Activated T-helper 2 cell treated with anti-CD3 and anti-CD28 coated beads, Interferon-gamma antibody, Interleukin-2, Interleukin-4, amounts not matched to agents 10 μg/mL and 5 μg/mL and 100 μg/mL, durations not matched to agents 14 hours and 24 hours and 36 hours (primary cell): ENCODE measurements at regions of chr16 and their contacts with region 1.

Region 1: GRCh38 chr16:58000706-58001676 is at the start of gene USB1:
- DNase-seq: peak; percentile 83
- H3K4me3 Mint-ChIP-seq: peak within 1 kb of the TSS; percentile 92
- H3K27ac Mint-ChIP-seq: peak within 1 kb of the TSS; percentile 90
- H3K4me1 Mint-ChIP-seq: peaks cover 35% of the 10 kb centered on the region
- H3K27me3 Mint-ChIP-seq: no peaks in the 10 kb centered on the region
- total RNA-seq, gene USB1: 51.6 and 57.8 TPM in 2 replicates

Region 2: DNA sequence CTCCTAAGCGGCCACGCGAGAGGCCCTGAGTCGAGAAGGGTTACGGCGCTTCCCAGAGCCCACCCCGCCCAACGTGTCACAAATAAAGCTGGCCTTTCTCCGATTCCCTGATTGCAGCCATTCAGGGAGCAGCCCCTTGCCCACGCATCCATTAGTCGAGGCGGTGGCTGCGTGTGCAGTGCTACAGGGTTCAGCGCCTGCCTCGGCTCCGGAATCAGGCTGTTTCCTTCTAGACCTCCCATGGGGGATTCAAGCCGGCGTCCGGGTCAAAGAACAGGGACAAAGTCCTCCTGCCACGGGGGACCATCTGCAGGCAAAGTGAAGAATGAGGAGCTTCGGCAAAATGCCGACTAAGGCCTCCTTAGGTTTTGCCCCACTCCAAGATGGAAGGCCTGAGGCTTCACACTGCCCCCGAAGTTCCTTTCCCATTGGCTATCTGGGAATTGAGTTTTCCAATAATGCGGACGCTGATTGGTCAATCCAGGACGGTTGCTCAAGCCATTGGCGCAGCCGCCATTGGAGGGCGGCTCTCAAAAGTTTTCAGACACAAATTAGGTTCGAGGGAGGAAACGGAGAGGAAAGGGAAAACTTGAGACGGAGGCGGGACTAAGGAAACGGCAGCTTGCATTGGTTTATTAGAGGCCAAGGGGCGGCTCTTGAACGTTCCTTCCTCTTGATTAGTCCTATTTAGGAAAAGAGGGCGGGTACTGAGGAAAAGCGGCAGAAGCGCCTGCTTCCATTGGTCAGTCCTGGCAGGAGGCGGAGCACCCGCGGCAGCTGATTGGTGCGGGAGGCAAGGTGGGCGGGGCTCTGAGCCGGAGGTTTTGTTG is 265.9 kb before region 1 on chr16:
- intact Hi-C with region 1: loop called (anchors 1 kb)
- DNase-seq: peak; percentile 98
- H3K4me3 Mint-ChIP-seq: peak overlapping the region; percentile 97
- H3K27ac Mint-ChIP-seq: peak overlapping the region; percentile 96
- H3K4me1 Mint-ChIP-seq: peaks cover 15% of the 10 kb centered on the region
- H3K27me3 Mint-ChIP-seq: no peaks in the 10 kb centered on the region

Region 3: GRCh38 chr16:57757326-57757786 is 243.6 kb before region 1 on chr16:
- intact Hi-C with region 1: loop called (anchors 5 kb)
- DNase-seq: peak; percentile 79
- H3K4me3 Mint-ChIP-seq: no peak overlapping the region
- H3K27ac Mint-ChIP-seq: no peak overlapping the region
- H3K4me1 Mint-ChIP-seq: peaks cover 6% of the 10 kb centered on the region
- H3K27me3 Mint-ChIP-seq: no peaks in the 10 kb centered on the region

Region 4: GRCh38 chr16:57810197-57811031 is 190.6 kb before region 1 on chr16:
- intact Hi-C with region 1: loop called (anchors 2 kb)
- DNase-seq: peak; percentile 78
- H3K4me3 Mint-ChIP-seq: peak overlapping the region; percentile 39
- H3K27ac Mint-ChIP-seq: peak overlapping the region; percentile 70
- H3K4me1 Mint-ChIP-seq: peaks cover 17% of the 10 kb centered on the region
- H3K27me3 Mint-ChIP-seq: peaks cover 17% of the 10 kb centered on the region

Region 5: GRCh38 chr16:57899771-57900661 is 101.0 kb before region 1 on chr16:
- intact Hi-C with region 1: loop called (anchors 1 kb)
- DNase-seq: peak; percentile 64
- H3K4me3 Mint-ChIP-seq: no peak overlapping the region
- H3K27ac Mint-ChIP-seq: no peak overlapping the region
- H3K4me1 Mint-ChIP-seq: no peaks in the 10 kb centered on the region
- H3K27me3 Mint-ChIP-seq: peaks cover 7% of the 10 kb centered on the region

Region 6: DNA sequence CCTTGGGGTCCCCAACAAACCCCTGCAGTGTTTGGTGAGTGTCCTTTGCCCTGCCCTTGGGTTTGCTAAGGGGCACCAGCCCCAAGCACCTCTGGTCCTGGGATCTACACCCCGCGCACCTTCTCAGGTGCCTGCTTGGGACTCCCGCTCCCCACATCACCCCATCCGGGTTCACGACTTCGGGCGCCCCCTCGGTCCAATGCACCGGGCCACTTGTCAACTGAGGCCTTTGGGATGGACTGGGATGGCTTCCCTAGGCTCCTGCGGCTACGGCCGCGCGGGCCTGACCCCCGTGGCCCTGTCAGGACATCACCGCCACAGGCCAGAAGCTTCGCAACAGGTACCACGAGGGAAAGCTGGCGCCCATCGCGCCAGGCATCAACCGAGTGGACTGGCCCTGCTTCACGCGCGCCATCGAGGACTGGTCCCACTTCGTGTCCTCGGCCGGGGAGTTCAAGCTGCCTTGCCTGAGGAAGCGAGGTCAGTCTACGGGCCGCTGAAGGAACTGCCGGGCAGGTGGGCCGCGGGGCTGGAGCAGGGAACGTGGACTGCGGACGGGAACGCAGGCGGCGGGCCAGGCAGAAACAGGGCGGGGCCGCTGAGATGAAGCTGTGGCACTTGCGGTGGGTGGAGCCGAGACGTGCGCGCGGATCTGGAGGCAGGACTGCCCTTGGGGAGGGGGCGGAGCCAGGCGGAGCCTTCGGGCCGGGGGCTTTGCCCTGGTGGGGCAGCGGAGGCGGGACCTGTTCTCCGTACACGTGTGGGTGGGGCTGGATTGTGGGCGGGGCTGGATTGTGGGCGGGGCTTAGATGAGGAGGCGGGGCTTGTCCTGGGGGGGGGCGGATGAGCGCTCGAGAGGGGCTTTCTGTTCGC is 16.4 kb before region 1 on chr16:
- intact Hi-C with region 1: loop called (anchors 1 kb)
- DNase-seq: peak; percentile 90
- H3K4me3 Mint-ChIP-seq: peak overlapping the region; percentile 87
- H3K27ac Mint-ChIP-seq: no peak overlapping the region
- H3K4me1 Mint-ChIP-seq: peaks cover 11% of the 10 kb centered on the region
- H3K27me3 Mint-ChIP-seq: peaks cover 12% of the 10 kb centered on the region

Region 7: DNA sequence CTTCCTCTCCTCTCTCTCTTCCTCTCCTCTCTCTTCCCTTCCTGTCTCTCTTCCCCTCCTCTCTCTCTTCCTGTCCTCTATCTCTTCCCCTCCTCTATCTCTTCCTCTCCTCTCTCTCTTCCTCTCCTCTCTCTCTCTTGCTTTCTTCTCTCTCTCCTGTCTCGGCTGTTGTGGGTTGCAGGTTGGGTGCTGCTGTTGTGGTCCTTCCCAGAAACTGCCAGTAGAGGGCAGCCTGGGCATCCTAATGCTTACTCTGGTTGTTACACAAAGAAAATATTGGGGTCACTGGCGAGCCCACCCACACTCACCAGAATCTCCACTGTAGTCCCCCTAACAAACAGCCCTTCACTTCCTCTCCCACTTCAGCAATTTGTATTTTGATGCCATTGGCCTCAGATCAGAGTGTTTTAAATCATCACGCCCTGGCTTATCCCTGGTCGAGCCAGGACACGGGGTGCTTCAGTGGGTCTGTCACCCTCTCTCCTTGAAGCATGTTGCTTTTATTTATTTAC is 19.7 kb after region 1 on chr16:
- intact Hi-C with region 1: no loop called
- DNase-seq: peak; percentile 43
- H3K4me3 Mint-ChIP-seq: no peak overlapping the region
- H3K27ac Mint-ChIP-seq: peak overlapping the region; percentile 26
- H3K4me1 Mint-ChIP-seq: peaks cover 11% of the 10 kb centered on the region
- H3K27me3 Mint-ChIP-seq: peaks cover 11% of the 10 kb centered on the region

Region 8: GRCh38 chr16:58249780-58250478 is 248.9 kb after region 1 on chr16:
- intact Hi-C with region 1: loop called (anchors 1 kb)
- DNase-seq: peak; percentile 83
- H3K4me3 Mint-ChIP-seq: peak overlapping the region; percentile 86
- H3K27ac Mint-ChIP-seq: peak overlapping the region; percentile 76
- H3K4me1 Mint-ChIP-seq: peaks cover 7% of the 10 kb centered on the region
- H3K27me3 Mint-ChIP-seq: peaks cover 4% of the 10 kb centered on the region